ENCODE measurements at regions of chr2 and their contacts with region 1.

Region 1: DNA sequence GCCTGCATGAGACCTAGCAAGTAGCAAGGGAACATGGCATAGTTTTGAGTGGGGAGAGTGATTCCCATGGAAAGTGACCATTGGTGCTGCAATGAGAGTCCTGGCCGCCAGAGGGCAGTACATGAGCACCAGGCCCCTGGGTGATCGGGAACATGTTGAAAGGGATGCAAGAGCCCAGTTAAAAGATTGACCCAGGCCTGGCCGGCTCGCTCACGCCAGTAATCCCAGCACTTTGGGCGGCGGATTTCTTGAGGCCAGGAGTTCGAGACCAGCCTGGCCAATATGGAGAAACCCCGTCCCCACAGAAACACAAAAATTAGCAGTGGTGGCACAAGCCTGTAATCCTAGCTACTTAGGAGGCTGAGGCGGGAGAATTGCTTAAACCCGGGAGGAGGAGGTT is 22.2 kb downstream of the FAP start:
- DNase-seq: peak; percentile 65
- CTCF ChIP-seq: peak; percentile 93

Region 2: GRCh38 chr2:160609346-160609745 is 1611.7 kb before region 1 on chr2:
- CTCF ChIA-PET with region 1: no interaction called
- POLR2A ChIA-PET with region 1: no interaction called
- DNase-seq: no peak
- CTCF ChIP-seq: no peak

Region 3: DNA sequence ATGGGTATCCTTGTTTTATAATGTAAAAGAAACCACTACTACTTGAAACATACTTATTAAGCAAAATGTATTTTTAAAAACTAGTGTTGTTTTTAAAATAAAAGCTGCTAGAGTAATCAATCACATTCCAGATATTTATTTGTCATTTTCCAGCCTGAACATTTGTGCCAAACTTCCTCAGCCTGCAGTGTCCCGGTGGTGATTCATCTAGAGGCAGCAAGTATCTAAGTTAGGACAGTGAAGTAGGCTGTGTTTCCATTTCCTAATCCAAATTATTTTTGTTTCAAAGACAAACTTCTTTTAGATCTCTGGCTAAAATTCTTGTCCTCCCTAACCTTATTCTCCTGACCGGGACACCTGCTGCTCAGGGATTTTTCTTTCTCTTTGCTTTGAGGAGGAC is 56.3 kb before region 1 on chr2:
- CTCF ChIA-PET with region 1: interaction called, 13 read pairs
- POLR2A ChIA-PET with region 1: no interaction called
- DNase-seq: no peak
- CTCF ChIP-seq: no peak

Region 4: GRCh38 chr2:162184821-162185446 is 36.1 kb before region 1 on chr2:
- CTCF ChIA-PET with region 1: no interaction called
- POLR2A ChIA-PET with region 1: no interaction called
- DNase-seq: no peak
- CTCF ChIP-seq: no peak

Region 5: DNA sequence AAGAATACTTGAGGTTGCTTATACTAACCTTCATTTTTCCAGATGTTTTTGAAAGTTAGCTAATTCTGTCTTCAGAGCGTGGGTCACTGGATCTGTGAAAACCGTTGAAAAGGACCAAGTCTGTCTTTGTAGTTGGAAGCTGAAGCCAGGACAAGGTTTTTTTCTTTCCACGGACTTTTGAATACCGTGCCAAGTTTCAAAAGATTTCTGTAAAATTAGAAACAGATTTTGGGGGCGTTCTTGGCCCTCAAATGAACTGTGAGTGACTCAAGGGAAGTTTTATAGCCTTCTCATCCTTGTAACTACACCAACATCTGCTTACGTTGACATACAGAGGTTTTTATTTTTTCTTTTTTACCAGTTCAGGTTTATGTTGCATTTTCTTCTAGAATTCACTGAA is 22.2 kb after region 1 on chr2 and contains the start of gene FAP:
- CTCF ChIA-PET with region 1: interaction called, 58 read pairs
- POLR2A ChIA-PET with region 1: no interaction called
- DNase-seq: no peak
- CTCF ChIP-seq: no peak

Region 6: GRCh38 chr2:162282765-162283425 is 61.8 kb after region 1 on chr2:
- CTCF ChIA-PET with region 1: interaction called, 23 read pairs
- POLR2A ChIA-PET with region 1: no interaction called
- DNase-seq: no peak
- CTCF ChIP-seq: no peak

Region 7: DNA sequence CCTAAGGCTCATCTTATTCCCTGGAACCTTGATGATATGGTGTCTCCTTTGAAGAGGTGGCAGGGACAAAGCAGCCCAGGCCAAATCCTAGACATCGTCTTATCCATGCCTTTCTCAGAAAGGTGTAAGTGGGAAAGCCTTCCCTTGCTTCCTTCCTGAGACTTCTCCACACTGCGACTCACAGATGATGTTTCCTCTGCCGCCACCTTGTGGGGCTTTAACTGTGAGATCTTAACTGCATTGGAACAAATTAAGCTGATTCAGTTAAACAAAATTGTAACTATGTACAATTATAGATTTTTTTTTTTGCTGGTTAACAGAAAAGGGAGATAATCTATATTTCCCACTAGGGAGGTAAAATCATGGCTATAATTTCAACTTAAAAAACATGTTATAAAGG is 112.9 kb after region 1 on chr2:
- CTCF ChIA-PET with region 1: interaction called, 28 read pairs
- POLR2A ChIA-PET with region 1: no interaction called
- DNase-seq: no peak
- CTCF ChIP-seq: peak; percentile 63

Region 8: DNA sequence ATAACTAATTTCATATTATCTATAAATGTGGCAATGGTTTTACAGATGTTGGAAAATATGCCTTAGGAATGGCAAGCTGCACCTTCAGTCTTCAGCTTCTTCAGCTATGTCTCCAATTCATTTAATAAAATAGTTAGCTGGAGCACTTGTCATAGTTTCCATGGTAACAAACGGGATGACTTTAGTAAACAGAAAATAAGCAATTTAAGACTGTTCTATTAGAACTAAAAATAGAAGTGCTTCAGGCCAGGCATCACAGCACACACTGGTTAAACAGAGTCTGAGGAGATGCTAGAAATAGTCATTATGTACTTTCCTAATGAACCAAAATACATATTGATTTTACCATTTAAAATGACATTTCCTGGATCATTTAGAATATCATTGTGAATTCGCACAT is 317.9 kb after region 1 on chr2:
- CTCF ChIA-PET with region 1: no interaction called
- POLR2A ChIA-PET with region 1: no interaction called
- DNase-seq: no peak
- CTCF ChIP-seq: no peak

Region 9: DNA sequence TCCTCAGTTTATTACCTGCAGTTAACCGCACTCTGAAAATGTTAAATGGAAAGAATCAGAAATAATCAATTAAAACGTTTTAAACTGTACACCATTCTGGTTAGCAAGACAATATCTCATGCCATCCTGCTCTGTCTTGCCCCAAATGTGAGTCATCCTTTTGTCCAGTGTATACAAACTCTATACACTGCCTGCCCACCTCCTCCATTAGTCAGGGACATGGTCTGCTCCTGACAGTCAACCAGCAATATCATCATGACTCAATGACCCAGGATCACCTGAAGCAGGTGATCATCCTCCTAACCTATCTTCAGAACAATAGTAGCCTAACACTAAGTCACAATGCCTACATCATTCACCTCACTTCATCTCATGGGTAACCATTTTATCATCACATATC is 402.8 kb after region 1 on chr2:
- CTCF ChIA-PET with region 1: no interaction called
- POLR2A ChIA-PET with region 1: no interaction called
- DNase-seq: no peak
- CTCF ChIP-seq: no peak